HEK293 (cell line): ENCODE measurements at regions of chr1 and their contacts with region 1.

Region 1: GRCh38 chr1:32400876-32401631 is 6.8 kb upstream of the BSDC1 start:
- H3K4me3 ChIP-seq: no peak overlapping the region
- H3K27ac ChIP-seq: no peak overlapping the region
- H3K4me1 ChIP-seq: no peaks in the 10 kb centered on the region
- CTCF ChIP-seq: peak; percentile 81

Region 2: GRCh38 chr1:32266921-32267591 is 134.0 kb before region 1 on chr1:
- CTCF ChIA-PET with region 1: no interaction called
- POLR2A ChIA-PET with region 1: no interaction called
- H3K4me3 ChIP-seq: no peak overlapping the region
- H3K27ac ChIP-seq: no peak overlapping the region
- H3K4me1 ChIP-seq: no peaks in the 10 kb centered on the region
- CTCF ChIP-seq: no peak

Region 3: GRCh38 chr1:32321712-32322291 is 79.3 kb before region 1 on chr1:
- CTCF ChIA-PET with region 1: no interaction called
- POLR2A ChIA-PET with region 1: no interaction called
- H3K4me3 ChIP-seq: no peak overlapping the region
- H3K27ac ChIP-seq: no peak overlapping the region
- H3K4me1 ChIP-seq: no peaks in the 10 kb centered on the region
- CTCF ChIP-seq: no peak

Region 4: GRCh38 chr1:32364836-32365235 is 36.2 kb before region 1 on chr1:
- CTCF ChIA-PET with region 1: no interaction called
- POLR2A ChIA-PET with region 1: no interaction called
- H3K4me3 ChIP-seq: no peak overlapping the region
- H3K27ac ChIP-seq: no peak overlapping the region
- H3K4me1 ChIP-seq: no peaks in the 10 kb centered on the region
- CTCF ChIP-seq: no peak

Region 5: DNA sequence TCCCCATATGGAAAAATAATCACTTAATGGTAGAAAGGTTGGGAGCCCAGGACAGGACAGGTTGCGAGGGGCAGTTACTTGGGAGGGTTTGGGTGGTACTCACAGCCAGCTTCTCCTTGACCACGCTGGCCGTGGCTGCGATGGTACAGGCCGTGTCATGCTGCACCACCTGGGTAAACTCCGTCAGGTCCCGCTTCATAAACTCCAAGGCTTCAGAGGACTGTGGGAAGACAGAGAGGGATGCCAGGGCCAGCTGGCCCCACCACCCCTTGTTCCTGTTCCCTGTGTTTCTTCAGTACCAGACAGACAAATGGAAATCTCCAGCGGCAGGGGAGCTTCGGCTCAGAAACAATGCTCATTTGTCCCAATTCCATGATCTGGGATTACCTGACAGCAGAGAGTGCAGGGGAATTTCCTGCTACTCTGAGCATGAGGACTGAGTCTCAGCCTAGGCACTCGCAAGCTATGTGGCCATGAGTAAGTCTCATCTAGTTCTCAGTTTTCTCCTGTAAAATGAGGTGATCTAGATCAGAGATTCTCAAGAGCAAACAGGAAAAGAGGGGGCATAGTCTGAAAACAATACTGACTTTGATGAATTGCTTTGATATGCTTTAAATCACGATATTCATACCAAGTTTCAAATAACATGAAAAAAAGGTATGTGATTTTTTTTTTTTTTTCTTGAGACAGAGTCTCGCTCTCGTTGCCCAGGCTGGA is 14.2 kb before region 1 on chr1:
- CTCF ChIA-PET with region 1: interaction called, 10 read pairs
- POLR2A ChIA-PET with region 1: interaction called, 3 read pairs
- H3K4me3 ChIP-seq: no peak overlapping the region
- H3K27ac ChIP-seq: no peak overlapping the region
- H3K4me1 ChIP-seq: no peaks in the 10 kb centered on the region
- CTCF ChIP-seq: no peak

Region 6: GRCh38 chr1:32413507-32414185 is 12.6 kb after region 1 on chr1:
- CTCF ChIA-PET with region 1: interaction called, 105 read pairs
- POLR2A ChIA-PET with region 1: interaction called, 3 read pairs
- H3K4me3 ChIP-seq: no peak overlapping the region
- H3K27ac ChIP-seq: no peak overlapping the region
- H3K4me1 ChIP-seq: no peaks in the 10 kb centered on the region
- CTCF ChIP-seq: no peak

Region 7: GRCh38 chr1:32426489-32427255 is 25.6 kb after region 1 on chr1:
- CTCF ChIA-PET with region 1: interaction called, 17 read pairs
- POLR2A ChIA-PET with region 1: interaction called, 6 read pairs
- H3K4me3 ChIP-seq: no peak overlapping the region; the same call in 1 of the 2 replicates
- H3K27ac ChIP-seq: no peak overlapping the region
- H3K4me1 ChIP-seq: no peaks in the 10 kb centered on the region
- CTCF ChIP-seq: 0 out of 2 replicates have a peak, but pooled peaks have one; percentile 22

Region 8: DNA sequence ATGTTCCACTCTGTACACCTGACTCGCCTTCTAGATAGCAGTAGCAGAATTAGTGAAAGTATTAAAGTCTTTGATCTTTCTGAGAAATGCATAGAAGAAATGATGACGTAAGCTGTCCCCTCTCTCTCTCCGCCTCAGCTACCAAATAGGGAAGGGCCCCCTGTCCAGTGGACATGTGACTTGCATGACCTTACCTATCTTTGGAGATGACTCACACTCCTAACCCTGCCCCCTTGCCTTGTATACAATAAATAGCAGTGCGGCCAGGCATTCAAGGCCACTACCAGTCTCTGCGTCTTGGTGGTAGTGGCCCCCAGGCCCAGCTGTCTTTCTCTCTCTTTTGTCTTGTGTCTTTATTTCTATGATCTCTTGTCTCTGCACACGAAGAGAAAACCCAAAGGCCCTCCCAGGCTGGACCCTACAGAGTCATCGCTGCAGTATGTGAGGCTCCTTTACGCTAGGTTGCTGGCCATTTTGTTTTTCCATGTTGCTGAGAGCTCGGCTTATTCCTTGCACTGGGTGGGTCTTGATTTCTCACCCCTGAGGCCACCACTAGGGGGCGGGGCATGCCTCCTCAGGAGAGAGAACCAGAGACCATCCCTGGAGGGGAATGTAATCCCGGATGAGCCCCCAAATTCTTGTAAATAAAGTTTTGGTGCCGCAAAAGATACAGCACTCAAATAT is 47.9 kb after region 1 on chr1:
- CTCF ChIA-PET with region 1: interaction called, 11 read pairs
- POLR2A ChIA-PET with region 1: no interaction called
- H3K4me3 ChIP-seq: no peak overlapping the region
- H3K27ac ChIP-seq: no peak overlapping the region
- H3K4me1 ChIP-seq: no peaks in the 10 kb centered on the region
- CTCF ChIP-seq: no peak